ENCODE measurements at regions of chr18 and their contacts with region 1.

Region 1: DNA sequence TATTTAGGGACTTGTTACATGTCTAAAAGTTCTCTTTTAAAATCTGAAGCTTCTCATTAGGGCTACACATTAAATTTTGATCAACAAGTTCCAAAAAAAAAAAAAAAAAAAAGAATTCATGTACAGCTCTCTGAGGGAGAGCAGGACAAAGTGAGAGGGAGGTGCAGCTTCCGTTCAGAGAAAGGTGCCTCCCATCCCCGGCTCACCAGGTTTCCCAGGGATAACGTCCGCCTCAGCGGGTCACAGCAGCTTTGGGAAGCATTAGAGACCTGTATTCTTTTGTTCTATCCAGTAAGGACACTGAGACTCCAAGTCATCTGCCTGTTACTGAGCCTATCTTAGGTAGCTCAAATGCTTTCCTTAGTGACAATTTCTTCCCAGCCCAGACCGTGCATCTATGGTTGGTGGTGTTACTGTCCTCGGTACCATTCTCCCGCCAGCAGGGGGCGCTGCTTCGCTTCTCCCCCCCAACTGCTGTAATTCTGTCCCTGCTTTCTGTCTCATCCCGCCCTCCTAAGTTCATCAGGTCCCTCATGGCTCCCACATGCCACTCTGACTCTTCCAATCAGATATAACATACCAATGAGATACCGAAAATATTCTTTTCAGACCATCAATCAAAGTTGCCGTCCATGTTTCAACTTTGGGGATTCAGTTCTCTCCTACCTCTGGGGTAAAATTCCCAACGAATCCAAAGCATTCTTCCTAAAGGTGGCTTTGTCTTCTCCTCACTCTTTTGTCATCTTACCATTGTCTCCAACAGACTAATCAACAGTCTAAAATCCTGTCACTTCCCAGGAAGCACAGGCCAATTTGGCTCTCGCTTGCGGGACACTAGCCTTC is 466.5 kb downstream of the METTL4 start:
- DNase-seq: peak; percentile 42
- H3K4me3 ChIP-seq: no peak overlapping the region
- H3K27ac ChIP-seq: no peak overlapping the region
- H3K4me1 ChIP-seq: no peaks in the 10 kb centered on the region
- H3K27me3 ChIP-seq: no peaks in the 10 kb centered on the region
- CTCF ChIP-seq: peak; percentile 47 to 67 (median 62)
- EP300 ChIP-seq: no peak
- POLR2A ChIP-seq: no peak

Region 2: GRCh38 chr18:1094409-1094808 is 1010.4 kb before region 1 on chr18:
- in situ Hi-C with region 1: no loop called
- intact Hi-C with region 1: no loop called
- DNase-seq: no peak
- H3K4me3 ChIP-seq: no peak overlapping the region
- H3K27ac ChIP-seq: no peak overlapping the region
- H3K4me1 ChIP-seq: no peaks in the 10 kb centered on the region
- H3K27me3 ChIP-seq: no peaks in the 10 kb centered on the region
- CTCF ChIP-seq: no peak
- EP300 ChIP-seq: no peak
- POLR2A ChIP-seq: no peak

Region 3: DNA sequence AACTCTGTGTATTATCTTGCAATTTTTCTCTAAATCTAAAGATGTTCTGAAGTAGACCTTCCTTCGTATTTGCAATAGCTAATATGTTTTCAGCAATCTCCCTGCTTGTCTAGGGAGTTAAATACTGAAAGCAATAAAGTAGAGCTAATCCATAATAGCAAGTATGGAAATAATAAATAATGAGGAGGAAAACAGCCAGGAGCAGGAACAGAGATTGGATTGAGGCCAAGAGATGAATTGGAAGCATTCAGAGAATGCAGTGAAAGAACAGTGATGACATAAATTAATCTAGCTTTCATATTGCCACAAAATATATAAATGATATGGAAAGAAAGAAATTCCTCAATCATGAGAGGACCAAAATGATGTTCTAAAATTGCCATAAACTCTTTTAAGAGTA is 213.2 kb before region 1 on chr18:
- in situ Hi-C with region 1: no loop called
- intact Hi-C with region 1: no loop called
- DNase-seq: no peak
- H3K4me3 ChIP-seq: no peak overlapping the region
- H3K27ac ChIP-seq: no peak overlapping the region
- H3K4me1 ChIP-seq: no peaks in the 10 kb centered on the region
- H3K27me3 ChIP-seq: no peaks in the 10 kb centered on the region
- CTCF ChIP-seq: no peak
- EP300 ChIP-seq: no peak
- POLR2A ChIP-seq: no peak

Region 4: GRCh38 chr18:2395427-2396161 is 290.8 kb after region 1 on chr18:
- in situ Hi-C with region 1: no loop called
- intact Hi-C with region 1: no loop called
- DNase-seq: no peak
- H3K4me3 ChIP-seq: no peak overlapping the region
- H3K27ac ChIP-seq: no peak overlapping the region
- H3K4me1 ChIP-seq: no peaks in the 10 kb centered on the region
- H3K27me3 ChIP-seq: no peaks in the 10 kb centered on the region
- CTCF ChIP-seq: no peak
- EP300 ChIP-seq: no peak
- POLR2A ChIP-seq: no peak

Region 5: GRCh38 chr18:2515908-2516625 is 411.2 kb after region 1 on chr18:
- in situ Hi-C with region 1: loop called in 1 of 4 experiments (anchors 25 kb)
- intact Hi-C with region 1: no loop called
- DNase-seq: no peak
- H3K4me3 ChIP-seq: no peak overlapping the region
- H3K27ac ChIP-seq: no peak overlapping the region
- H3K4me1 ChIP-seq: no peaks in the 10 kb centered on the region
- H3K27me3 ChIP-seq: no peaks in the 10 kb centered on the region
- CTCF ChIP-seq: no peak
- EP300 ChIP-seq: no peak
- POLR2A ChIP-seq: no peak